Heart left ventricle (tissue), 16 donors: ENCODE measurements at regions of chr3 and their contacts with region 1.

Region 1: DNA sequence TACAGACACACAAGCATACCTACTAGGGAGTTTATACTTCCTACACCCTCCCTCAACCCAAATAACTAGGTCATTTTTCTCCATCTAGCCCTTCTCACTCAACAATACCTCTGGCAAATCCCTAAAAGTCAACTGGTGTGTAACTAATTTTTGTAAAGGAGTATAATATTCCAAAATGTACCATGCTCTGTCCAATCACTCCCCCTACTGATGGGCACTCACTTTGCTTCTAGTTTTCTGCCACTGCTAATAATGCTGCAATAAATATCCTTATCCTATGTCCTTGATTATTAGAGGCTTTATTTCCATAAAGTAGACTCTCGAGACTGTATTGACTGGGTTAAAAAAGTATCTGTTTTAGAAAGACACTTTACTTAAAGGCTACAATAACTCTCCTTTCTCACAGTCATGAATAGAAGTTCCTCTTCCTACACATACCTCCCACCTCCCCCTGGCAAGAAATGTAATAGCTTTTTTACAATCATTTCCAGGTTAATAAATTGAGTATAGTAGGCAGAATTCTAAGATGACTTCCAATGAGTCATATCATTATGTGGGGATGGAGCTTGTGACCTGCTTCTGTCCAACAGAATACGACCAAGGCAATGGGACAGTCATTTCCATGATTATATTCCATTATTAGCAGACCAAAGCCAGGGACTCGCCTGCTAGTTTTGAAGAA is 30.0 kb downstream of the SHQ1 start:
- DNase-seq: no peak
- ATAC-seq: no peak
- H3K4me3 ChIP-seq: no peak overlapping the region
- H3K27ac ChIP-seq: no peak overlapping the region
- H3K4me1 ChIP-seq: peaks cover 4 to 38% (median 33%) of the 10 kb centered on the region in 12 donors
- H3K27me3 ChIP-seq: no peaks in the 10 kb centered on the region
- CTCF ChIP-seq: peak; percentile 19 to 67 (median 53)
- POLR2A ChIP-seq: no peak

Region 2: DNA sequence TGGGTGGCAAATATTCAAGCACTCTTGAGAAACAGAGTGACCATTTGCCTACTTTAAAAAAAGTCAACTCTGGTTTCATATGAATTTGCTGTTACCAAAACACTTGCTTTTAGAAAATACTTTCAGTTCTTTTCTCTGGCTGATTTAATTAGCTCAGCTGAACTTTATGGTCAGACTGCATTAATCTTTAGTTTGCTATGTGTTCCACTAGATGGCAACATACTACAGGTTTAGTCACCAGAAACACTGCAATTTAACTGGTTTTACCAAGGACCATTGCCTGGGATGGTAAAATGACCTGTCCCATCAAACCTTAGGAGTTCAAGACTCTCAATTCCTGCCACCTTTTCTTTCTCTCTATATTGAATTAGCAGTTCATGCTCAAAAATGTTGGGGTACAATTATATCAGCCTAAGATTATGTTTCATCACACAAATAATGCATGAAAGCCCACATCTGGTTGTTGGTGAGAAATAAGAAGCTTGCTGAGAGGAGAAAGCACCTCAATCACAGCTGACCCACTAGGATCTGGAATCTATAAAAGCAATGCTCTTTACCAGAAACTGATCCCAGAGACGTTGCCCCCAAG is 1107.2 kb before region 1 on chr3:
- intact Hi-C with region 1: loop called in 6 of 10 experiments (anchors 2 to 10 kb)
- DNase-seq: no peak
- ATAC-seq: peak in 2 of 4 donors; percentile 47 to 58
- H3K4me3 ChIP-seq: no peak overlapping the region
- H3K27ac ChIP-seq: no peak overlapping the region
- H3K4me1 ChIP-seq: peaks cover 0 to 44% (median 6%) of the 10 kb centered on the region in 12 donors
- H3K27me3 ChIP-seq: no peaks in the 10 kb centered on the region
- CTCF ChIP-seq: peak; percentile 45 to 74 (median 58)
- POLR2A ChIP-seq: no peak

Region 3: GRCh38 chr3:71725279-71725991 is 1092.8 kb before region 1 on chr3 and contains the start of gene EIF4E3:
- intact Hi-C with region 1: loop called in 5 of 10 experiments (anchors 5 to 10 kb)
- DNase-seq: peak; percentile 40 to 76 (median 46)
- ATAC-seq: peak; percentile 15 to 75 (median 64)
- H3K4me3 ChIP-seq: peak within 1 kb of the TSS; percentile 73 to 96 (median 86)
- H3K27ac ChIP-seq: peak within 1 kb of the TSS; percentile 25 to 89 (median 75)
- H3K4me1 ChIP-seq: peaks cover 0 to 58% (median 12%) of the 10 kb centered on the region in 12 donors
- H3K27me3 ChIP-seq: no peaks in the 10 kb centered on the region
- CTCF ChIP-seq: no peak
- POLR2A ChIP-seq: no peak
- total RNA-seq, gene EIF4E3: 28.5 to 53.0 (median 47.1) TPM

Region 4: GRCh38 chr3:71875461-71875947 is 942.7 kb before region 1 on chr3:
- intact Hi-C with region 1: loop called (anchors 1 to 5 kb)
- DNase-seq: peak; percentile 59 to 85 (median 76)
- ATAC-seq: peak; percentile 80 to 96 (median 91)
- H3K4me3 ChIP-seq: no peak overlapping the region
- H3K27ac ChIP-seq: no peak overlapping the region
- H3K4me1 ChIP-seq: peaks cover 0 to 8% (median 0%) of the 10 kb centered on the region in 12 donors
- H3K27me3 ChIP-seq: peaks cover 0 to 9% (median 0%) of the 10 kb centered on the region in 9 donors
- CTCF ChIP-seq: peak; percentile 77 to 90 (median 85)
- POLR2A ChIP-seq: no peak

Region 5: DNA sequence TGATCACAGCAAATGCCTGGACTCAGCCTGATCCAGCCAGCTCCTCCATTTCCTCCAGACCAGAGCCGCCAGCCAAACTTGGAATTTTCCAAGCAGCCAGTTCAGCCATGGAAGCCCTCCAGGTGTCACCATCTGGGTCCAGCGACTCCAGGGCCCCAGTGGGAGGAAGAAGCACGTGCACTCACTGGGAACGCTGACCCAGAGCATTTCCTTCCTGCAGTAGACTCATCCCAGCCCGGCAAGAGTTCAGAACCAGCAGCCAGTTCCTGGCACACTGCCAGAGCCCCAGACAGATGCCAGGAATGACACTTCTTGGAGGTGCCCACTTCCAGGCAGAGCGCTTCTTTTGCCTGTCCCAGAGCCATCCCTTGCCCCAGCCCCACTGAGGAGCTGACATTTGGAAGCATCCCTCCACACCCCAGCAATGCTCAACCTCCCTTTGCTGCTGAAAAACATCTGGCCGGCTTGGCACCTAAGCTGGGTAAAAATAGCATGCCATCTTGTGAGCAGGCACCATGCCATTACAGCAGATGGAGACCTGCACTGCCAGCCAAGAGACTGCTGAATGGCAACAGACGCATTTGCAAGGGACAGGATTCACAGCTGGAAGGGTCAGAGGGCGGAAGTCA is 572.9 kb before region 1 on chr3:
- intact Hi-C with region 1: loop called in 1 of 10 experiments (anchors 10 kb)
- DNase-seq: peak; percentile 70 to 86 (median 75)
- ATAC-seq: peak; percentile 79 to 84 (median 82)
- H3K4me3 ChIP-seq: no peak overlapping the region
- H3K27ac ChIP-seq: peak overlapping the region in 1 of 12 donors; percentile 41
- H3K4me1 ChIP-seq: peaks cover 0 to 45% (median 29%) of the 10 kb centered on the region in 12 donors
- H3K27me3 ChIP-seq: no peaks in the 10 kb centered on the region
- CTCF ChIP-seq: no peak
- POLR2A ChIP-seq: no peak

Region 6: GRCh38 chr3:72458358-72458757 is 359.9 kb before region 1 on chr3:
- intact Hi-C with region 1: loop called in 1 of 10 experiments (anchors 10 kb)
- DNase-seq: no peak
- ATAC-seq: no peak
- H3K4me3 ChIP-seq: no peak overlapping the region
- H3K27ac ChIP-seq: no peak overlapping the region
- H3K4me1 ChIP-seq: peaks cover 0 to 16% (median 9%) of the 10 kb centered on the region in 12 donors
- H3K27me3 ChIP-seq: peaks cover 0 to 4% (median 0%) of the 10 kb centered on the region in 9 donors
- CTCF ChIP-seq: no peak
- POLR2A ChIP-seq: no peak

Region 7: DNA sequence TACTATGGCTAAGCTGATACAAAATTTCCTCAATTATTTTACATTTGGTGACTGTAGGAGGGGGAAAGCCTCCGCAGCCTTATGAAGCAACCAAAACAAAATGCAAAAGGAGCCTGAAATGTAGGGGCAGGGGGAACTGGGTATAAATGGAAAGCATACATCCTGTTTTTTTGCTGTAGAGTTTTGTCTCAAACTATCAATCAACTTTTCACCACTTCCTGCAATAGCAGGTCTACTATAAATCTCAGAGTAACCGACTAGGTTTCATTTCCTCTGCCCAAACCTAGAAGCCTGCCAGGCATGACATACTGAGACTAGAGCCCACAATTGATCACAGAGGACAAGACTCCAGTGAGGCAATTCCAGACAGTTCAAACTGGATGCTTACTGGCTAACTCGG is 61.3 kb before region 1 on chr3:
- intact Hi-C with region 1: no loop called
- DNase-seq: no peak
- ATAC-seq: no peak
- H3K4me3 ChIP-seq: no peak overlapping the region
- H3K27ac ChIP-seq: peak overlapping the region in 1 of 12 donors; percentile 7
- H3K4me1 ChIP-seq: peaks cover 0 to 15% (median 0%) of the 10 kb centered on the region in 12 donors
- H3K27me3 ChIP-seq: no peaks in the 10 kb centered on the region
- CTCF ChIP-seq: no peak
- POLR2A ChIP-seq: no peak

Region 8: GRCh38 chr3:73298243-73299183 is 480.3 kb after region 1 on chr3:
- intact Hi-C with region 1: no loop called
- DNase-seq: no peak
- ATAC-seq: no peak
- H3K4me3 ChIP-seq: no peak overlapping the region
- H3K27ac ChIP-seq: no peak overlapping the region
- H3K4me1 ChIP-seq: no peaks in the 10 kb centered on the region
- H3K27me3 ChIP-seq: peaks cover 0 to 5% (median 0%) of the 10 kb centered on the region in 9 donors
- CTCF ChIP-seq: no peak
- POLR2A ChIP-seq: no peak